ENCODE measurements at regions of chr6 and their contacts with region 1.

Region 1: DNA sequence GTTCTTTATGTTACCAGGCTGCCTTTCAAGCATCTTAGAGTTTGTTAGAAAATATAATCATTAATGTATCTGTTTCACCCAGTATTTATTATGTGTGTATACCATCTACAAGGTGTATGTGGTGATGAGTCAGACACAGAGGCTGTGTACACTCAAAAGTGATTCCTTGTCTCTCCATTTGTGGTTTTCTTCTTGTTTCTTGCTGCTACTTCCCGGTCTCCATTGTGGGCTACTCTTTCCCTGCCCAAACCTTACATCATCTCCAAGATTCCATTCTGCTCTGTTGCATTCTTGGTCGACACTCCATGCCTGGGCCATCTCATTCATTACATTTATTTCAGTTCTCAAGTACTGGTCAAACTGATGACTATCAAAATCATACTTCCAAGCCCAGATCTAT is 182.2 kb upstream of the STXBP5 start:
- DNase-seq: no peak
- ATAC-seq: no peak

Region 2: DNA sequence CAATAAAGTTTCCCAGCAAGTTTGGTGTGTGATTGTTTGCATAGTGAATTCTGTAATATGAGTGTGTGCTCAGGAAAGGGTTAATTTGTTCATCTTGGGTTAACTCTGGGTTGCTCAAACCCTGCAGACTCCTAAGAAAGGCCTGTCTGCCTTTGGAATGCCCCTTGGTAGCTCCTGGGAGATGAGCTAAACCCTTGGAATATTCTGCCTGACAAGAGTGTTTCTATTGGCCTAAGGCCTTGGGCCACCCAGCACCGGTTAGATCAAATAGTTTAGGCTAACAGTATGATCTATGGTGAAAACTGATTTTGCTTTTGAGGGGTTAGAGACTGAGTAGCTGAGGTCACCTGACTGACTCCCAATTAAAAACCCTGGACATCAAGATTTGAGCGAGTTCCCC is 744.9 kb before region 1 on chr6:
- intact Hi-C with region 1: loop called in 1 of 2 experiments (anchors 10 kb)
- DNase-seq: no peak
- ATAC-seq: no peak

Region 3: GRCh38 chr6:146997062-146997461 is 25.0 kb before region 1 on chr6:
- intact Hi-C with region 1: no loop called
- DNase-seq: no peak
- ATAC-seq: no peak

Region 4: DNA sequence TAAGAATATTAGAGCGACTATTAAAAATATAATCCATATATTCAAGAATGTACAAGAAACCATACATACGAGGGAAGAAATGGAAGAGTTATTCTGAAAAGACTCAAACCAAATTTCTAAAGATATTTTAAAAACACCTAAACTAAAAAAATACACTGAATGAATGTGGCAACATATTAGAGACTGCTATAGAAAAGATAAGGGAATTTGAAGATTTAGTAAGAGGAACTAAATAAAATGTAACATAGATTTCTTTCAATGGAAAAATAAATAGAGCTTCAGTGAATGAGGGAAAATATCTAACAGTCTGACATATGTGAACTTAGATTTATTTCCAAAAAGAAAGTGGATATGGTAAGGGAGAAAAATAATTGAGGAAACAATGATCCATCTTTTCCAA is 12.7 kb before region 1 on chr6:
- intact Hi-C with region 1: loop called in 1 of 2 experiments (anchors 2 kb)
- DNase-seq: no peak
- ATAC-seq: no peak

Region 5: DNA sequence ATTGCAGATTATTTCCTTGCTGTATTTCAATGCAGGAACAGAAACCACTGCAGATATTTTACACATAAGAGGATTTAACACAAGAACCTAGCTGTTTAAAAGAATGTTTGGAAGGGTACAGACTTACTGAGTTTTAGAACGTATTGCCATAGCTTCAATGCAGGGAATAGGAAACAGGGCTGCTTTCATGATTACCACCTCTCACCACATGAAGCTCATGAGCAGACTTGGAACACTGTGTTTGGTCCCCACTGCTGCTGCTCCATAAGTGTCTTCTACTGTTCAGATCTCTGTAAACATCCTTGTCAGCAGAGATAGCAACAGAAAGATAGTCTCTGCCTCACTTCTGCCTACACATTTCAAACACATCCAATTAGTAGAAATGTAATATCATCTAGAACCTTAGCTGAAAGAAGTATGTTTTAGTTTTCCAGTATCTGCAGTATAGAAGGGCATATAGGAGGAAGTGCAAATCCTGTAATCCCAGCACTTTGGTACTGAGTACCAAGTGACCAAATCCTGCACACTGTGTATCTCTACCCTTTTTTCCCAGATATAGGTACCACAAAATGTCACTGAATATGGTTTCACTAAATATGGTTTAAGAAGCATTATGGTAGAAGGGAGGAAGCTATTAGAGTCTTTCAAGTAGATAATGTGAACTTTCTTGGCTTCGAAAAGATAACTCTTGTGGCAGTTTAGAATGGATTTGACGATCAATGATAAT is 234.1 kb after region 1 on chr6:
- intact Hi-C with region 1: no loop called
- DNase-seq: no peak
- ATAC-seq: no peak

Measured in left cardiac atrium (tissue), 4 donors.